Posterior vena cava (tissue), 2 donors: ENCODE measurements at regions of chr11 and their contacts with region 1.

Region 1: DNA sequence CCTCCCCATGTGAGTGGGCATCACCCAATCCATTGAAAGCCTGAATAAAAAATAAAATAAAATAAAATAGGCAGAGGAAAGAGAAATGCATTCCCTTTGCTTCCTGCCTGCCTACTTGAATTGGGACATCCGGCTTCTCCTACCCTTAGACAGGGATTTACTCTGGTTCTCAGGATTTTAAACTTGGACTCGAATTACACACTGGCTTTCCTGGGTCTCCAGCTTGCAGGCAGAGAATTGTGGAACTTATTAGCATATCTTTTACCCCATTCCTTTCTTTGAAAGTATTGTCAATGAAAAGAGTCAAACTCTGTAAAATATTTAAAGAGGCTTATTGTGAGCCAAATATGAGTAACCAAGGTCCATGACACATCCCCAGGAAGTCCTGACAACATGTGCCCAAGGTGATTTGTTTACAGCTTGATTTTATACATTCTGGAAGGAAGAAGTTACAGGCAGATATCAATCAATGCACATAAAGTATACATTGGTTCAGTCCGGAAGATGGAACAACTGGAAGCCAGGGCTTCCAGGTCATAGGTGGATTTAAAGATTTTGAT is 78.4 kb upstream of the CCDC90B start:
- DNase-seq: no peak

Region 2: GRCh38 chr11:83306200-83307080 is 58.1 kb before region 1 on chr11:
- intact Hi-C with region 1: no loop called
- DNase-seq: no peak

Region 3: DNA sequence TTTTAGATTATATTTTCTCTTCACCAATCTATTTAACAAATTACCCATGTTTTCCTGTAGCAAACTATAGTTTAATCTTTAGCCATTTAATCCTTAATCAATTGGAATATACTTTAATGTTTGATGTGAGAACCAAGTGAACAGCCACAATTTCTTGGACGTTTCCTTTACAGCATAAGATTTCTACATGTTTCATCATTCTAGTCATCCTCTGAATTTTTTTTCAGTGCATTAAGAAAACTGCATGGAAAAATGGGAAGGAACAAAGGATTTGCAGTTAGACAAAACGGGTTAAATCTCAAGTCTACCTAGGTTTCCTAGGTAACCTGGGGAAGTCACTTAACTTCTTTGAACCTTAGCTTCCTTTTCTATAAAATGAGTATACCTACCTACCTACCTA is 428.8 kb after region 1 on chr11:
- intact Hi-C with region 1: loop called in 1 of 2 experiments (anchors 5 kb)
- DNase-seq: no peak